Dendritic cell treated with granulocyte-macrophage colony-stimulating factor and Interleukin-4, amounts not matched to agents 40 ng/mL and 50 ng/mL, for 4 days (primary cell): ENCODE measurements at regions of chr19 and their contacts with region 1.

Region 1: DNA sequence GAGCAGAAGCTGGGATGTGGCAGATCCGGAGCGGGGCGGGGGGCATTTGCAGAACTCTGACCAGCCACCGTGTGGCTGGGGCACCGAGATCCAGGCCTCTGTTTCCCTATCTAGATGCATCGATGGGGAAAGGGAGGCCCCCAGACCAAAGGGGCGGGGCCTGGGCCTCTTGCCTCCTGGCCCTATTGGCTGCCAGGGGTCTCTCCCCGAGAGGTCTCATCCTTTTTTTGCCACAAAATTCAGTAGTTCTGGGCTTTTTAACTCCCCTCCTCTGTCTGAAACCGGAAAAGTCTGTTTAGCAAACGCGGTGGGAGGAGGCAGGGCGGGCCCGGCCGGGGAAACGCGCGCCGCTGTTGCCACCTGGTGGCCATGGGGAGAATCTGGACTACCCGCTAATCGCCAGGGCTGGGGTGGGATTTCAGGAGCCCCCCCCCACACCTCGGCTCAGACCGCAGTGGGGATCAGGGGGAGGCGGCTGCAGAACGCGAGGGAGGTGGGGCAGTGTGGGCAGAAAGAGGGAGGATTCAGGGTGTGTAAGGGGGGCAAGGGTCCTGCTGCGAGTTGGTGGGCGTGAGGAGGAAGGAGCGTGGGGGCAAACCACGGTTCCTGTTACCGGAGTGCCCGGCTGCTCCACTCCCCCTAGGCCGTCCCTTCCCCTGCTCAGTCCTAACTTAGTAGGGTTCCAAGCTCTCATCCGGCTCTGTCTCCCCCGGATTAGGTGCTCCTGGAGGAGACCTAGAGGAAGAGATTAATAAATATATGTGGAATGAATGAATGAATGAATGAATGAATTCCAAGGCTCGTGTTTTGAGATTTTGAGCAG is 28.3 kb downstream of the IL12RB1 start:
- H3K4me3 Mint-ChIP-seq: peak overlapping the region; percentile 61
- H3K27ac Mint-ChIP-seq: peak overlapping the region; percentile 81
- H3K4me1 Mint-ChIP-seq: peaks cover 16% of the 10 kb centered on the region
- H3K27me3 Mint-ChIP-seq: no peaks in the 10 kb centered on the region

Region 2: GRCh38 chr19:17938092-17938845 is 120.2 kb before region 1 on chr19:
- intact Hi-C with region 1: loop called (anchors 5 kb)
- H3K4me3 Mint-ChIP-seq: no peak overlapping the region
- H3K27ac Mint-ChIP-seq: no peak overlapping the region
- H3K4me1 Mint-ChIP-seq: peaks cover 10% of the 10 kb centered on the region
- H3K27me3 Mint-ChIP-seq: no peaks in the 10 kb centered on the region

Region 3: DNA sequence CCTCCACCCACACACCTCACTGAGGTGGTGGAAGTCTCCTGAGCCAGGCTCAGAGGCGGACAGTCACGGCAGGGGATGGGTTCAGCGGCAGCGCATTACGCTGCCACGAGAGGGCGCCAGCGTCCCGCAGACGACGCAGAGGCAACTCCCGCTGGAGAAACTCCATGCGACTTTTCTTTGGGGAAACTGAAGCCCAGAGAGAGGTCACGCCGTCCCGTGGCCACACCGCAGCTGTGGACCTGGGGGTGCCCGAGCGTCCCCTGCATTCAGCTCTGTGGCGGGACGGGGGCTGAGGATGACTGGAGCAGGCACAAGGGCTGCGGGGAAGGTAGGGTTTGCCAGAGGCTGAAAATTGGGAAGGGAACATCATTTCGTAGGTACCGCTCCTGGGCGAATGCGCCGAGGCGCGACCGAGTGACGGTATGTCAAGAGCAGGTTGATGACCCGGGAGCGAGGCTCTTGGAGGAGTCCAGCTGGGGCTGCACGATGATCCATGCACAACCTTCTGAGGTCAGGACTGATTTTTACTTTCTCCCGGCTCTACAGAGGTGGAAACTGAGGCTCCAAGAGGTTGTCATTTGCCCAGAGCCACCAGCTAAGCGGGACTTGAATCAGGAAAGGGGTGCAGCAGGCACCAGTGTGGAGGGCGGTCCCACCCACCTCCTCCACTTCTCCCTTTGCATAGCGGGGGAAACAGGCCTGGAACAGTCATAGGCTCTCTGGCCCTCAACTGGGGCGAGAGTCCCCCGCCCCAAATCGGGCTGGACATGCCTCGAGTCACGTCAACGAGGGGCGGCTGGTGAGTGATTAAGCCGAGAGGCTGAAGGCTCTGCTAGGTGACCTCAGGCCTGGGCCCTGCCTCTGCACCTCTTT is 51.1 kb before region 1 on chr19:
- intact Hi-C with region 1: loop called (anchors 1 kb)
- H3K4me3 Mint-ChIP-seq: peak overlapping the region; percentile 89
- H3K27ac Mint-ChIP-seq: peak overlapping the region; percentile 80
- H3K4me1 Mint-ChIP-seq: peaks cover 43% of the 10 kb centered on the region
- H3K27me3 Mint-ChIP-seq: no peaks in the 10 kb centered on the region

Region 4: GRCh38 chr19:18021121-18021755 is 37.2 kb before region 1 on chr19:
- intact Hi-C with region 1: loop called (anchors 5 kb)
- H3K4me3 Mint-ChIP-seq: peak overlapping the region; percentile 61
- H3K27ac Mint-ChIP-seq: peak overlapping the region; percentile 89
- H3K4me1 Mint-ChIP-seq: peaks cover 76% of the 10 kb centered on the region
- H3K27me3 Mint-ChIP-seq: no peaks in the 10 kb centered on the region

Region 5: GRCh38 chr19:18097217-18097992 is 39.0 kb after region 1 on chr19 and contains the start of gene MAST3:
- intact Hi-C with region 1: no loop called
- H3K4me3 Mint-ChIP-seq: peak within 1 kb of the TSS; percentile 81
- H3K27ac Mint-ChIP-seq: peak within 1 kb of the TSS; percentile 73
- H3K4me1 Mint-ChIP-seq: peaks cover 34% of the 10 kb centered on the region
- H3K27me3 Mint-ChIP-seq: peaks cover 14% of the 10 kb centered on the region